MCF 10A (cell line): ENCODE measurements at regions of chr3 and their contacts with region 1.

Region 1: DNA sequence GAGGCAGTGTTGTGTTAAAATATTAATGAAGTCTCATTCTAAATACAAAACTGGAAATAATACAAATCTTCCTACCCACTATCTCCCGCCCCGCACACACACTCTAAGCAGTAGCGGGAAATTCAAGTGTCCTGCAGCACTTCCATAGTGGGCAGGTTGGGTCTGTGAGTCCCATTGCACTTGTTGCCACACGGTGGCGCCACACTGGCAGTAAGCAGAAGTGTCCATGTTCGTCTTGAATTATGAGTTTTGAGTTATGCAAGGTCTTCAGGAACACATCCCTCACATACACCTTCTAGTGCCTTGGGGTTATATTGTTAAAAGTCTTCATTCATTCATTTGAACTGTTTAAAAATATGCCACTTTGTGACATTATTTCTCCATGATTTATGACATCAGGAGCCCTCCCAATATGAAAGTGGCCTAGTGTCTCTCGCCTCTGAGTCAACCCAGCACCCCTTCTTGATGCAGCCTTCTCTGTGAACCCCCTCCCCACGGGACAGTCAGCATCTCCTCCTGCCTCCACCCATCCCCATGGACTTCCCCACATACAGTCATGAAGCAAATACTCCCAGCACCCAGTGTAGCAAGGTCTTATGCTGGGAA is 17.6 kb upstream of the CCDC174 start:
- DNase-seq: peak; percentile 73
- H3K4me3 Mint-ChIP-seq: no peak overlapping the region
- H3K27ac Mint-ChIP-seq: no peak overlapping the region
- H3K4me1 Mint-ChIP-seq: no peaks in the 10 kb centered on the region
- H3K27me3 Mint-ChIP-seq: peaks cover 13% of the 10 kb centered on the region
- CTCF ChIP-seq: peak; percentile 74

Region 2: GRCh38 chr3:14725013-14725412 is 91.1 kb after region 1 on chr3:
- CTCF ChIA-PET with region 1: no interaction called
- POLR2A ChIA-PET with region 1: no interaction called
- intact Hi-C with region 1: no loop called
- DNase-seq: peak; percentile 46
- H3K4me3 Mint-ChIP-seq: no peak overlapping the region
- H3K27ac Mint-ChIP-seq: no peak overlapping the region
- H3K4me1 Mint-ChIP-seq: no peaks in the 10 kb centered on the region
- H3K27me3 Mint-ChIP-seq: peaks cover 30% of the 10 kb centered on the region
- CTCF ChIP-seq: no peak

Region 3: GRCh38 chr3:14780927-14781507 is 147.1 kb after region 1 on chr3:
- CTCF ChIA-PET with region 1: interaction called, 3 read pairs
- POLR2A ChIA-PET with region 1: no interaction called
- intact Hi-C with region 1: loop called (anchors 5 kb)
- DNase-seq: peak; percentile 38
- H3K4me3 Mint-ChIP-seq: no peak overlapping the region
- H3K27ac Mint-ChIP-seq: no peak overlapping the region
- H3K4me1 Mint-ChIP-seq: no peaks in the 10 kb centered on the region
- H3K27me3 Mint-ChIP-seq: peaks cover 9% of the 10 kb centered on the region
- CTCF ChIP-seq: peak; percentile 10